CD4-positive, alpha-beta memory T cell (primary cell): ENCODE measurements at regions of chr13 and their contacts with region 1.

Region 1: GRCh38 chr13:99228737-99229691 is 28.4 kb downstream of the UBAC2 start:
- DNase-seq: no peak
- H3K4me3 ChIP-seq: no peak overlapping the region
- H3K4me3 Mint-ChIP-seq: peak overlapping the region; percentile 33 to 91 (median 78)
- H3K27ac ChIP-seq: peak overlapping the region; percentile 52
- H3K27ac Mint-ChIP-seq: peak overlapping the region; percentile 63 to 92 (median 88)
- H3K4me1 ChIP-seq: peaks cover 86% of the 10 kb centered on the region
- H3K4me1 Mint-ChIP-seq: peaks cover 56 to 75% (median 65%) of the 10 kb centered on the region in 4 donors
- H3K27me3 ChIP-seq: no peaks in the 10 kb centered on the region
- H3K27me3 Mint-ChIP-seq: no peaks in the 10 kb centered on the region

Region 2: GRCh38 chr13:99258210-99258860 is 29.3 kb after region 1 on chr13 and contains the start of gene GPR18:
- CTCF ChIA-PET with region 1: interaction called, 18 read pairs
- POLR2A ChIA-PET with region 1: interaction called, 14 read pairs
- intact Hi-C with region 1: no loop called
- DNase-seq: peak; percentile 50 to 69 (median 62)
- H3K4me3 ChIP-seq: peak within 1 kb of the TSS; percentile 52 to 67
- H3K4me3 Mint-ChIP-seq: peak within 1 kb of the TSS; percentile 89 to 98 (median 94)
- H3K27ac ChIP-seq: peak within 1 kb of the TSS; percentile 60
- H3K27ac Mint-ChIP-seq: peak within 1 kb of the TSS; percentile 84 to 96 (median 94)
- H3K4me1 ChIP-seq: peaks cover 55% of the 10 kb centered on the region
- H3K4me1 Mint-ChIP-seq: peaks cover 47 to 85% (median 59%) of the 10 kb centered on the region in 4 donors
- H3K27me3 ChIP-seq: no peaks in the 10 kb centered on the region
- H3K27me3 Mint-ChIP-seq: no peaks in the 10 kb centered on the region
- total RNA-seq, gene GPR18: 21.5 to 22.8 TPM

Region 3: DNA sequence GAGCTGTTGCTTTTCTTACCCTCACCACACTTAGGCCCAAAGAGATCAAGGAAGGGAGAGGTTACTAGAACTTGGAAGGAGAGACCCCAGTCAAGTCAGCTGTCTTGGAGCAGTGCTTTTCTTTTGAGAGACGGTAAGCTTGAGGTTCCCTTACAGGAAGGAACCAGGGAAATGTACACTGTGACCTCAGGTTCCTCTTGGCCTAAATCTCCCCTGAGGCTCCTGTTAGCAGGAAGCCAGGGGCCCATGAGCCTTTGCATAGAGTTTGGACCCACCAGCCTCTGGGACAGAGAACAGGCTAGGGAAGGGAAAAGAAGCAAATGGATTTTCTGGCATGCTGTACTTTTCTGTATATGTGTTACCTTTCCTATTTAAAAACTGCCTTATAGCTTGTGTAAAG is 35.0 kb after region 1 on chr13:
- CTCF ChIA-PET with region 1: interaction called, 13 read pairs
- POLR2A ChIA-PET with region 1: interaction called, 4 read pairs
- intact Hi-C with region 1: no loop called
- DNase-seq: no peak
- H3K4me3 ChIP-seq: no peak overlapping the region
- H3K4me3 Mint-ChIP-seq: peak overlapping the region in 7 of 8 donors; percentile 17 to 74 (median 47)
- H3K27ac ChIP-seq: peak overlapping the region; percentile 39
- H3K27ac Mint-ChIP-seq: peak overlapping the region; percentile 59 to 92 (median 88)
- H3K4me1 ChIP-seq: peaks cover 50% of the 10 kb centered on the region
- H3K4me1 Mint-ChIP-seq: peaks cover 43 to 70% (median 55%) of the 10 kb centered on the region in 4 donors
- H3K27me3 ChIP-seq: no peaks in the 10 kb centered on the region
- H3K27me3 Mint-ChIP-seq: no peaks in the 10 kb centered on the region

Region 4: DNA sequence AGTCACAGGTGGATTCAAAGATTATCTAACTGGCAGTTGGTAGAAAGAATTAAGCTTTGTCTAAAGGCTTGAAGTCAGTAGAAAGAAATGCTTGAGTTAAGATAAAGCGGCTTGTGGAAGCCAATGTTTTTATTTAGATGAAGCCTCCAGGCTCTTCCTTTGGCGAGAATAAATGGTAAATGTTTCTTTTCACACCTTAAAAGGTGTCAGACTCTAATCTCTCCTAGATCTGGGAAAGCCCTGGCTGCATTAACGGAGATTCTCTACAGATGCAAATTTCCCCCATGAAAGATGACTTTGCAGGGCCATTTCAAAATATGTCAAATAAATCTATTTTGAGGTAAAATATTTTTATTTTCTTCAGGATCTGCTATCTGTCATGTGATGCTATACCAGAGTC is 822.1 kb after region 1 on chr13:
- CTCF ChIA-PET with region 1: no interaction called
- POLR2A ChIA-PET with region 1: no interaction called
- intact Hi-C with region 1: no loop called
- DNase-seq: no peak
- H3K4me3 ChIP-seq: no peak overlapping the region
- H3K4me3 Mint-ChIP-seq: no peak overlapping the region
- H3K27ac ChIP-seq: no peak overlapping the region
- H3K27ac Mint-ChIP-seq: no peak overlapping the region
- H3K4me1 ChIP-seq: no peaks in the 10 kb centered on the region
- H3K4me1 Mint-ChIP-seq: no peaks in the 10 kb centered on the region
- H3K27me3 ChIP-seq: no peaks in the 10 kb centered on the region
- H3K27me3 Mint-ChIP-seq: peaks cover 8 to 15% of the 10 kb centered on the region in 2 donors